ENCODE measurements at regions of chr17 and their contacts with region 1.

Region 1: GRCh38 chr17:57747221-57748017 is 2.3 kb upstream of the CCDC182 start:
- DNase-seq: no peak
- ATAC-seq: peak; percentile 37 to 62 (median 44)
- H3K4me3 ChIP-seq: no peak overlapping the region
- H3K27ac ChIP-seq: no peak overlapping the region
- H3K4me1 ChIP-seq: peaks cover 0 to 7% (median 0%) of the 10 kb centered on the region in 12 donors
- H3K27me3 ChIP-seq: peaks cover 0 to 3% (median 0%) of the 10 kb centered on the region in 9 donors
- CTCF ChIP-seq: peak; percentile 51 to 83 (median 74)
- POLR2A ChIP-seq: no peak

Region 2: GRCh38 chr17:57552114-57552624 is 195.2 kb before region 1 on chr17:
- intact Hi-C with region 1: no loop called
- DNase-seq: no peak
- ATAC-seq: peak in 3 of 4 donors; percentile 22 to 57 (median 31)
- H3K4me3 ChIP-seq: no peak overlapping the region
- H3K27ac ChIP-seq: no peak overlapping the region
- H3K4me1 ChIP-seq: peaks cover 0 to 50% (median 21%) of the 10 kb centered on the region in 12 donors
- H3K27me3 ChIP-seq: no peaks in the 10 kb centered on the region
- CTCF ChIP-seq: peak in 11 of 12 donors; percentile 14 to 62 (median 46)
- POLR2A ChIP-seq: no peak

Region 3: GRCh38 chr17:57671667-57672632 is 75.5 kb before region 1 on chr17:
- intact Hi-C with region 1: loop called in 1 of 10 experiments (anchors 5 kb)
- DNase-seq: peak; percentile 80 to 87 (median 82)
- ATAC-seq: peak; percentile 78 to 91 (median 88)
- H3K4me3 ChIP-seq: no peak overlapping the region
- H3K27ac ChIP-seq: peak overlapping the region in 2 of 12 donors; percentile 8 to 35
- H3K4me1 ChIP-seq: peaks cover 0 to 28% (median 10%) of the 10 kb centered on the region in 12 donors
- H3K27me3 ChIP-seq: no peaks in the 10 kb centered on the region
- CTCF ChIP-seq: peak; percentile 87 to 97 (median 96)
- POLR2A ChIP-seq: no peak

Region 4: GRCh38 chr17:57724026-57724728 is 23.2 kb before region 1 on chr17:
- intact Hi-C with region 1: no loop called
- DNase-seq: no peak
- ATAC-seq: no peak
- H3K4me3 ChIP-seq: no peak overlapping the region
- H3K27ac ChIP-seq: no peak overlapping the region
- H3K4me1 ChIP-seq: no peaks in the 10 kb centered on the region
- H3K27me3 ChIP-seq: no peaks in the 10 kb centered on the region
- CTCF ChIP-seq: no peak
- POLR2A ChIP-seq: no peak